Breast epithelium (tissue), 4 donors: ENCODE measurements at regions of chr10 and their contacts with region 1.

Region 1: DNA sequence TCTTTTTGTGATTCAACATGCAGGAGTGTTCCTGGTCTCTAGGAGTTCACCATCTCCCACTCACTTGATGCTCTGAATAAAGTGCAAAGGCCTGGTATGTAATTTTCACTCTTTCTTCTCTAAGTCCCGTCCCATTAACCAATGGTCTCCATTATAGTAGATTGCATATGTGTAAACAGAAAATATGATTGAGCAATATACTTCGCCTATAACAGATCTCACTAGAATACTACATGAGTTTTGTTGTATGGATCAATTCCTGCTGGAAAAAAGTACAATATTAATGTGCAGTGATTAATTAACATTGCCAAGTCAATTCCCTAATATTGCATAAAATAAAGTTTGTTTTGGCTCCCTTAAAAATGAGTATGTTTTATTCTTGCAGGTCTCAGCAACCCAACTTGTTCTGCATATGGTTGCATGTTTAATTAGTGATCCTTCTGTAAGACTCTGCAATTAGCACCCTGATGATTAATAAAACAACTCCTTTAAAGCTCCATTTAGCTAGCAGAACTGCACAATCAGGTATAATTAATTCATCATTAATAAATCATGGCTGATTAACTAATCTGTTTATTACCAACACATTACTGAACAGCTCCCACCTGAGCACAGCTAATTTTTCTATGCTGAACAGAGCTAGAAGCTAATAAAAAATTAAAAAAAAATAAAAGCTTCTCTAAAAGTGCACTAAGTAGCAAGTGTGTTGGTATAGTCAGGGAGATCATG is 37.8 kb upstream of the ATOH7 start:
- DNase-seq: no peak
- H3K4me3 ChIP-seq: no peak overlapping the region
- H3K27ac ChIP-seq: no peak overlapping the region
- H3K4me1 ChIP-seq: no peaks in the 10 kb centered on the region
- H3K27me3 ChIP-seq: no peaks in the 10 kb centered on the region
- CTCF ChIP-seq: no peak
- POLR2A ChIP-seq: no peak

Region 2: GRCh38 chr10:67666416-67667034 is 603.2 kb before region 1 on chr10:
- intact Hi-C with region 1: no loop called
- DNase-seq: no peak
- H3K4me3 ChIP-seq: no peak overlapping the region
- H3K27ac ChIP-seq: no peak overlapping the region
- H3K4me1 ChIP-seq: no peaks in the 10 kb centered on the region
- H3K27me3 ChIP-seq: no peaks in the 10 kb centered on the region
- CTCF ChIP-seq: peak in 2 of 3 donors; percentile 25 to 38
- POLR2A ChIP-seq: no peak

Region 3: DNA sequence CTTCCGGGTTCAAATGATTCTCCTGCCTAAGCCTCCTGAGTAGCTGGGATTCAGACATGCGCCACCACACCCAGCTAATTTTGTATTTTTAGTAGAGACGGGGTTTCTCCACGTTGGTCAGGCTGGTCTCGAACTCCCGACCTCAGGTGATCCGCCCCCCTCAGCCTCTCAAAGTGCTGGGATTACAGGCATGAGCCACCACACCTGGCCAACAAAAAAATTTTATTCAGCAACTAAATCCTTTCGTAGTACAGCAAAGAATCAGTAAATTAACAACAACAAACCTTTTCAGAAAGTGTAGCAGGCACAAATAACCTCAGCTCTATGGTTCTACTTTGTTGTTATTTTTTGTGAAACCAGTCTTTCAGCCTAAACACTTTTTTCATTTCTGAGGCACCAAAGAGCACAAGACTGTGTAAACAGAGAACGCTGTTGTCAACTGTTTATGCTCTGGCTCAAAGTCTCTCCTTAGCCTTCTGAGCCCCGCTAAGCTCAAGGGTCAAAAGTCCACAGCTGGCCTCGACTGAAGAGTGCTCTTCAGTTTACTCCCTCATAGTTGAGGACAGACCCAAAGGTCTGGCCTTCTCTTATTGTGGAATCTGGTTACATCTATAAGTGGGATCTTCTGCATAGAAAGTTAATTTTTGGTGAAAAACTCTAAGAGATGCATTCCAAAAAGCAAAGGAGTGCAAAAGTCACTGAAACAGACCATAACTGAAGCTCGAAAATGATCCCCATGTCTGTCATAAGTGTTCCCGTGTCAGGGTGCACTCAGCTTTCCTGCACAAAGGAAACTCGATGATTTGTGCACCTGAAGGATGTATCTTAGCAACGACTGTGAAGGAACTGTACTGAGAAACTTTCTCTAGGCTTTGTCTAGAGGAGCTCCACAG is 606.8 kb after region 1 on chr10:
- intact Hi-C with region 1: loop called (anchors 5 kb)
- DNase-seq: no peak
- H3K4me3 ChIP-seq: no peak overlapping the region
- H3K27ac ChIP-seq: no peak overlapping the region
- H3K4me1 ChIP-seq: no peaks in the 10 kb centered on the region
- H3K27me3 ChIP-seq: no peaks in the 10 kb centered on the region
- CTCF ChIP-seq: no peak
- POLR2A ChIP-seq: no peak